Dendritic cell treated with granulocyte-macrophage colony-stimulating factor and Interleukin-4, amounts not matched to agents 40 ng/mL and 50 ng/mL, for 4 days (primary cell): ENCODE measurements at regions of chr17 and their contacts with region 1.

Region 1: DNA sequence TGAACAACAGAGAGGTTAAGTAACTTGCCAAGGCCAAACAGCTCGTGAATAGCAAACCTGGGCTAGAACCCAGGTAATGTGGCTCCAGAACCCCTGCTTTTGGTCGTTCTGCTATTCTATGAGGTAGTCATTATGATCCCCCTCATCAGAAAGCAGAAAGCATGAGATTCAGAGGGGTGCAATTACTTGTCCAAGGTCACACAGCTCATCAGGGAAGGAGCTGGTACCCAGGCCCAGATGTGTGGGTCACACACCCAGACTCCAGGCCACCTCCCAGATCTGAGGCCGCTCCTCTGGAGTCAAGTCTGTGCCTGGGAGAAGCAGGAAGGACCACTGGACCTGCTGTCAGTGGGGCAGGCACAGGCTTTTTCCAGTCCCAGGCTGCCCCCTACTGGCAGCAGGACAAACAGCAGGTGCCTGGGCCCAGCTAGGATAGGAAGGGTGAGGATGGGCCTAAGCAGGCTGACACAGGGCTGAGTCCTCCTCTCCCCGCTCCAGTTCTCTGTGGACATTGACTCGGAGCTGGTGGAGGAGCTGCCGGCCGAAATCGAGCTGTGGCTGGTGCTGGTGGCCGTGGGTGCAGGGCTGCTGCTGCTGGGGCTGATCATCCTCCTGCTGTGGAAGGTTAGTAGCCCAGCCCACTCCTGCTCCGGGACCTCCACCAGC is 7.8 kb upstream of the PDK2 start:
- H3K4me3 Mint-ChIP-seq: no peak overlapping the region
- H3K27ac Mint-ChIP-seq: no peak overlapping the region
- H3K4me1 Mint-ChIP-seq: no peaks in the 10 kb centered on the region
- H3K27me3 Mint-ChIP-seq: peaks cover 8% of the 10 kb centered on the region

Region 2: DNA sequence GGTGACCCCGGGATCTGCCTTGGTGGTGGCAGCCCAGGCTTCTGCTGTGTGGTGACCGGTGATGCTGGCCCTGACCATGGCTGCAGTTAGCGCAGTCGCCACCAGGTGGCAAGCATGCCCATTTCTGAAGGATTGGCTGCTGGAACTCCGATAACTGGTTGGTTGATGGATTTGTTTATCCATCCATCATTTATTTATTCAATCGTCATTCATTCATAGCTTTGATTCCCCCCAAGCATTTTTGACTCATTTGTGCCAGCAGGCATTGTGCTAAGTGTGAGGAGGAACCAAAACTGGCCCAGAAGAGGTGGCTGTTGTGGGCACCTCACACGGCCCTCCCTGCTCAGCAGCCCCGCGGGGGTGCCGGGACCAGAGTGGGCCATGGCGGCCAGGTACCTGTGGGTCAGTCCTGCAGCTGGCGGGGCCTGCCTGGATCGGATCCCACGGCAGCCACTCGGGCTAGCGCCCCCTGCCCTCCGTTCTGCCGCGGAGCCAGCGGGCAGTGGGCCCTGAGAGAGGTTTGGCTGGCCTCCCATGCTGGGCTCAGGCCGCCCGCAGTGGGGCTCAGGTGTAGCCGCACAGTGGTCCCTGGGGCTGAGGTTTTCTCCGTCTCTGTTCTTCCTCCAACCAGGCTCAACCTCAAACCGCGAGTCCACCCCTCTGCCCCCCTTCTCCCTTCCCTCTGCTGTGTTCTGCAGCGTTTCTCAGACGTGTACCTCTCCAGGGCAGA is 60.3 kb before region 1 on chr17:
- intact Hi-C with region 1: loop called (anchors 1 kb)
- H3K4me3 Mint-ChIP-seq: no peak overlapping the region
- H3K27ac Mint-ChIP-seq: no peak overlapping the region
- H3K4me1 Mint-ChIP-seq: peaks cover 18% of the 10 kb centered on the region
- H3K27me3 Mint-ChIP-seq: peaks cover 35% of the 10 kb centered on the region

Region 3: GRCh38 chr17:50117202-50118051 is 30.0 kb after region 1 on chr17:
- intact Hi-C with region 1: no loop called
- H3K4me3 Mint-ChIP-seq: peak overlapping the region; percentile 63
- H3K27ac Mint-ChIP-seq: no peak overlapping the region
- H3K4me1 Mint-ChIP-seq: peaks cover 23% of the 10 kb centered on the region
- H3K27me3 Mint-ChIP-seq: peaks cover 93% of the 10 kb centered on the region

Region 4: DNA sequence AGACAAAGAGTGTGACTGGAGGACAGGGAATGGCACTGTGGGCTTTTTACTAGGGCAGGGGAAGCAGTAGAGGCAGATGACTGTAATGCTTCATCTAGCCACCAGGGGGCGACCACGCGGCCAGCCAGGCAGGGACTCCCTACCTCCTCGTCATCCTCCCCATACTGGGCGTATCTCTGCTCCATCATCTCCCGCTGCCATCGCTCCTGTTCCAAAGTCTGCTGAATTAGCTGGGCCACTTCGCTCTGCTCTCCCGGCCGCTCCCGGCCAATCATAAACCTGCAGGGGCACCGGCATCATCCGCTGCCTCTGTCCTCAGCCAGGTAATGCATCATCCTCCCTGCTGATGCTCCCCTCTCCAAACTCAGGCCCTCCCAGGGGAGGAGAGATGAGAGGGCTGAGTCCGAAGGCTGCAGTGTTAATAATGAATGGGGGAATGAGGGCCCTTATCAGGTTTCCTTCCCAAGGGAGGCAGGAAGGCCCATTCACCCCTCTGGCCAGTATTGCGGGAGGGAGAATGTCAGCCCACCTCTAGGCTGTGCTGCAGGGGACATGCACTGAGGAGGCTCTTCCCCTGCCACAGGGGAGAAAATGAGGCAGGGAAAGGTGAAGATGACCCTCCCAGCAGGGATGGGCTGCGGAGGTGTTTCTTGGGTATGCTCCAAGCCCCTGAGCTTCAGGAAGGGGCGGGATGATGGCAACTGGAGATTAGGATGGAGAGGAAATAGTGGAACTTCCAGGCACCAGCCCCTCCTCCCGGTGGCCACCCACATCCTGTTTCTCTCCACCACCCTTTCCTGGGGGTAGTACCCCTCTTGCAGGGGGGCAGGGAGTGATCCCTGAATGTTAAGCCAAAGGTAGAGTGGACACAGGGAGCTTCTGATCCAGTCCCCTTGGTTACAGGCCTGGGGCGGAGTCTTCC is 52.8 kb after region 1 on chr17:
- intact Hi-C with region 1: no loop called
- H3K4me3 Mint-ChIP-seq: no peak overlapping the region
- H3K27ac Mint-ChIP-seq: peak overlapping the region; percentile 48
- H3K4me1 Mint-ChIP-seq: peaks cover 81% of the 10 kb centered on the region
- H3K27me3 Mint-ChIP-seq: no peaks in the 10 kb centered on the region

Region 5: GRCh38 chr17:50218771-50219315 is 131.5 kb after region 1 on chr17:
- intact Hi-C with region 1: no loop called
- H3K4me3 Mint-ChIP-seq: no peak overlapping the region
- H3K27ac Mint-ChIP-seq: no peak overlapping the region
- H3K4me1 Mint-ChIP-seq: peaks cover 27% of the 10 kb centered on the region
- H3K27me3 Mint-ChIP-seq: peaks cover 10% of the 10 kb centered on the region